ENCODE measurements at regions of chr3 and their contacts with region 1.

Region 1: DNA sequence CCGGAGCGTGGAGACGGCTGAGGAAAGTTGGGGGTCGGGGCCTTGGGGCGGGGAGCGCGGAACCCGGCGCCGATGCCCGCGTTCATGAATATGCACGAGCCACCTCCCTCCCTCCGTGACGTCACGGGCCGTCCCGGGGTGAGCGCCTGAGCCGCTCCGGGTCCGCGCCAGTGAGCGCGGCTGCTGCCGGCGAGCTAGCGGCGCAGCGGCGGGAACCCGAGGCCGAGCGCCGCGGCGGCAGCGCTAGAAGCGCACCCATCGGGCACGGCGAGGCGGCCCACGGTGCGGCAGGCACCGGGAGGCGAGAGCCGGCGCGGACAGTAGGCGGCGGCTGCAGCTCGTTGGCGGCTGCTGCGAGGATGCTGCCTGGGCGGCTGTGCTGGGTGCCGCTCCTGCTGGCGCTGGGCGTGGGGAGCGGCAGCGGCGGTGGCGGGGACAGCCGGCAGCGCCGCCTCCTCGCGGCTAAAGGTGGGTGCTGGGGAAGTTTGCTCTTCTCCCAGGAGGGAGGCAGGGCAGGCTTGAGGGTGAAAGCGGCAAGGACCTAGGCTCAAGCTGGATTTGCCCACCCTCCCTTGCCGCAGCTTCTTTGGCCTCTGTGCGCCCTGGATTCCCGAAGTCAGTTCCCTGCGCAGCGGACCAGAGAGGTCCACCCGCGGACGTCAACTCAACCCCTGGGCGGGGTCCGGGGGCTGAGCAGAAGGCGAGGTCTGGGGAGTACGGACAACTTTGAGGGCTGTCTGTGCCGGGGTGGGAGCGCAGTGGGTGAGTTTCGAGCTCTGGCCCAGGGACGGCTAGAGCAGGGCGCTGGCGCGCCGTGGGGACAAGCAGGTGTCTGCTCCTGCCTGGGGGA is at the start of gene CLSTN2:
- DNase-seq: peak; percentile 79 to 86
- ATAC-seq: peak; percentile 81 to 90 (median 86)
- H3K4me3 ChIP-seq: peak within 1 kb of the TSS; percentile 63
- H3K27ac ChIP-seq: no peak within 1 kb of the TSS
- H3K4me1 ChIP-seq: peaks cover 6% of the 10 kb centered on the region
- H3K27me3 ChIP-seq: peaks cover 0 to 33% (median 0%) of the 10 kb centered on the region in 3 donors
- CTCF ChIP-seq: peak; percentile 11
- total RNA-seq, gene CLSTN2: 1.5 to 5.0 (median 2.2) TPM

Region 2: GRCh38 chr3:139427283-139427993 is 507.8 kb before region 1 on chr3:
- intact Hi-C with region 1: loop called (anchors 5 to 10 kb)
- DNase-seq: no peak
- ATAC-seq: peak; percentile 75 to 96 (median 82)
- H3K4me3 ChIP-seq: no peak overlapping the region
- H3K27ac ChIP-seq: no peak overlapping the region
- H3K4me1 ChIP-seq: no peaks in the 10 kb centered on the region
- H3K27me3 ChIP-seq: no peaks in the 10 kb centered on the region
- CTCF ChIP-seq: peak; percentile 85

Region 3: DNA sequence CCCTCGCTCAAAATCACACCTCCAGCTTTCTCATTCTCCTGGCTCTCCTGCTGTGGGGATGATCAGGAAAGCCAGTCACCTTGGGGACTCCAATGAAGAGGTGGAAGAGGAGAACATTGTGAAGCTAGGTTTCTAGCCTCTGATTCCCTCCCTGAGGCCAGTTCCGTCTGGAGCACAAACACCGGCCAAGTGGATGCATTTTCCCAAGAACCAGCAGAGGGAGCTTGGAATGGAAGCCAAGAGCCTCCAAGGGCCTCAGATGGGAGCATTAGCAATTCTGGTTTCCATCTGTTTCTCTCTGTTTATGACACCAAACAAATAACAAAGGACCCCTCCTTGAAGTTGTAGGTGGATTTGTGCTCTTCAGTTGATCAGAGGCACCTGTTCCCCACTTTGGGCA is 216.8 kb before region 1 on chr3:
- intact Hi-C with region 1: loop called in 1 of 2 experiments (anchors 2 kb)
- DNase-seq: peak; percentile 33 to 53
- ATAC-seq: peak in 2 of 4 donors; percentile 64 to 69
- H3K4me3 ChIP-seq: no peak overlapping the region
- H3K27ac ChIP-seq: no peak overlapping the region
- H3K4me1 ChIP-seq: no peaks in the 10 kb centered on the region
- H3K27me3 ChIP-seq: peaks cover 0 to 3% (median 0%) of the 10 kb centered on the region in 3 donors
- CTCF ChIP-seq: peak; percentile 38

Region 4: DNA sequence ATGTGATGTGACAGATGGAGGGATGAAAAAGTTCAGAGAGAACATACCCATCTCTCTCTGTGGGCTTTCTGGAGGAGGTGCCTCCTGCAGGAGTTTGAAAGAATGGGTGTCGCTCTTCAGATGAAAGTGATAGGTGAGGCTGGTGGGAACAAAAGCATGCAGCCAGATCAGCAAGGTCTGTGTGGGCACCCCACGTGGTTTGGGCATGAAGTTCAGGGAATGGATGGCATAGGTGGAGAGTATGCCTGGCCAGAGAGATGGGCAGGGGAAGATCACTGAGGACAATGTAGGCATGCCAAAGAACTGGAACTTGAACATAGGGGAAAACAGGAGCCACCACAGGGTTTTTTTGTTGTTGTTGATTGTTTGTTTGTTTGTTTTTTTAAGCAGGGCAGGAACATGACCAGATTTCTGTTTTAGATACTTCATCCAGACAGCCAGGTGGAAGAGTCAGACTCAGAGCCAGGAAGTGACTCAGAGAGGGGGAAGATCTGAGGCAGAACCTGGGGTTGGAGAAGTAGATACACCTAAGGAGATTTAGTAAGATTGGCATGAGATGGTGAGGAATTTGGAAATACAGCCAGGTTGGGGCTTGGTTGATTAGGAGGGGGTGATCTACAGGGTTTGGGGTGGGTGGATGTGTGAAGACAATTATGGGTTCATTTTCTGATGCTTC is 65.1 kb before region 1 on chr3:
- intact Hi-C with region 1: no loop called
- DNase-seq: no peak
- ATAC-seq: no peak
- H3K4me3 ChIP-seq: no peak overlapping the region
- H3K27ac ChIP-seq: no peak overlapping the region
- H3K4me1 ChIP-seq: no peaks in the 10 kb centered on the region
- H3K27me3 ChIP-seq: peaks cover 0 to 2% (median 0%) of the 10 kb centered on the region in 3 donors
- CTCF ChIP-seq: no peak

Region 5: DNA sequence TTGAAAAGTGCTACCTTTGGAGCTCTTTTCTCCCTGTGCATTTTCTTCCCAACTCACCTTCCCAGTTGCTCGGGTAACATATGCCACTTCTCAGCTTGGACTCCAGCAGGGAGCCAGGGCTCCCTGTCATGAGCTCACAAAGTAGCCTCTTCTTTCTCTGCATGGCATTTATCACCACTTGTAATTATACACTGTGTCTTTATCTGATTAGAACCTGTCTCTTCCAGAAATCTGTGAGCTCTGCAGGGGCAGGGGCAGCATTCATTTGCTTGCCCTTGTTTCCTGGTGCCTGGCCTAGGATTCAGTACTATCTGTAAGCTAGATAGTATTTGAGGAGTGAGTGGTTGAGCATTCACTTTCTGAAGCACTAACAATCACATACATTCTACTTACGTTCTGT is 100.6 kb after region 1 on chr3:
- intact Hi-C with region 1: no loop called
- DNase-seq: no peak
- ATAC-seq: no peak
- H3K4me3 ChIP-seq: no peak overlapping the region
- H3K27ac ChIP-seq: no peak overlapping the region
- H3K4me1 ChIP-seq: no peaks in the 10 kb centered on the region
- H3K27me3 ChIP-seq: no peaks in the 10 kb centered on the region
- CTCF ChIP-seq: no peak

Region 6: DNA sequence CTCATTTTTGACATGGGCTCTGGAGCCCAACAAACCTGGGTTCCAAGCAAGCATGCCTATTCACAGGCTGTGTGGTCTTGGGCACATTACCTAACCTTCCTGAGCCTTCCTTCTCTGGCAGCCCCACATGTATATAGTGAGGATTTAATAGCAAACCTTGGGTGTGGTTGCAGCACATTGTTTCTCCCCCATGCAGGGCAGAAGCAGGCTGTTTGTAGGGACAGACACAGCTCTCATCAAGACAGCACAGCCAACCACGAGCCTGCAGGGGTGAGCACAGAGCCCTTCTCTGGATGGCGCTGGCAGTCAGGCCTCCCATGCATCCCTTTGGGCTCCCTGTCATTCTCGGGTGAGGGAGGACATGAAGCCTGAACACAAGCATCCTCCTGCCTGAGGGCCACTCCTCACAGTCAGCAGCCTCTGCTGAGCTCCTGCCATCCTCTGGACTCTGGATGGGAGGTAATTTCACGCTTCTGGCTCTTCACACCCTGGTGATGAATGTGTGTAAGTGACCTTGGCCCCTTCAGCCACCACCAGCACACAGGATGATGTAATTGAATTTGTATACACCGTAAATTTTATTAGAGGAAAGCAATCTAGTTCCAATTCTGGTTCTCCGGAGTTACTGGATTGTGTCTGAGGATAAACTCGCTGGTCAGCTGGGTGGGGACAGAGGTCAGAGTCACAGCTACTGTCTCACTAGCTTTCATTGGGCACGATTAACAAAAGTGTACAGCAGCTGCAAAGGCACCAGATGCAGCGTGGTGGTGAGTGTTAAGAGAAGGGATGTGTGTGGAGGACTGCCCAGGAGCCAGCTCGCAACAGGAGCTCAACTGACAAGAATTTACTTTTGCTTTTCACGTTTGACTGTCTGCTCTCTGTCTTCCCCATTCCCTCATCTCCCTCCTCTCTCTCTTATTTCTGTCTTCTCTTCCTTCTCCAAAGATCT is 117.8 kb after region 1 on chr3:
- intact Hi-C with region 1: no loop called
- DNase-seq: no peak
- ATAC-seq: no peak
- H3K4me3 ChIP-seq: no peak overlapping the region
- H3K27ac ChIP-seq: no peak overlapping the region
- H3K4me1 ChIP-seq: no peaks in the 10 kb centered on the region
- H3K27me3 ChIP-seq: no peaks in the 10 kb centered on the region
- CTCF ChIP-seq: no peak

Region 7: DNA sequence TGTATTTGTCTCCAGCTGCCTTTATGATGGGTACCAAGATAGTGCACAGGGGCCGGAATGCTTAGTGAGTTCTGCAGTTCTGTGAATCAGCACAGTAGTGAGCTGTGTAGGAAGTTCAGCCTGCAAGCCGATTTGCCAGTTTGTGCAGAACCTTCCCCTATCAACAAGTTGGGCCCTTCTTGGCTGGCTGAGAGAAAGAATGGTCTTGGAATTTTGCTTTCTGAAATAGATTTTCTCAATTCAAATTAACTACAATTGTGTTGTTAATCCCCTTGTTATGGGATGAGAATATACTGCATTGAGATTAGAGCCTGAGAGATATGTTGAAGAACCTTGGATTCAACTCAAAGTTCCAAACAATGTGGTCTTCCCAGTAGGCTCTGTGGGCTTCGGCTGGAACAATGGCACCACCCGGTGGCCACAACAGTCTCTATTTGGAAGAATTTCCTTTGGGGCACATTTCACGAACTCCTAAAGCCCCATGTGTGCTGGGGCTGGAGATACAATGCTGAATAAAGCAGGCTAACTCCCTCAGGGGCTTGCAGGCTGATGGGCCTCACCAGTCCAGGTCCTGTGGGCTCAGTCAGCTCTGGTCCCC is 801.7 kb after region 1 on chr3:
- intact Hi-C with region 1: loop called in 1 of 2 experiments (anchors 10 kb)
- DNase-seq: peak; percentile 39 to 71
- ATAC-seq: peak in 1 of 4 donors; percentile 56
- H3K4me3 ChIP-seq: no peak overlapping the region
- H3K27ac ChIP-seq: no peak overlapping the region
- H3K4me1 ChIP-seq: no peaks in the 10 kb centered on the region
- H3K27me3 ChIP-seq: no peaks in the 10 kb centered on the region
- CTCF ChIP-seq: peak; percentile 45